ENCODE measurements at regions of chr1 and their contacts with region 1.

Region 1: GRCh38 chr1:114716304-114717170 is at the start of gene NRAS:
- DNase-seq: peak; percentile 97
- H3K4me3 ChIP-seq: peak within 1 kb of the TSS; percentile 64 to 87 (median 81)
- H3K27ac ChIP-seq: peak within 1 kb of the TSS; percentile 86 to 97 (median 93)
- H3K4me1 ChIP-seq: peaks cover 16 to 56% (median 33%) of the 10 kb centered on the region in 4 donors
- H3K27me3 ChIP-seq: no peaks in the 10 kb centered on the region
- CTCF ChIP-seq: peak in 1 of 5 experiments; percentile 22
- EP300 ChIP-seq: peak; percentile 57
- POLR2A ChIP-seq: peak; percentile 84
- total RNA-seq, gene NRAS: 14.5 to 56.3 (median 44.6) TPM

Region 2: DNA sequence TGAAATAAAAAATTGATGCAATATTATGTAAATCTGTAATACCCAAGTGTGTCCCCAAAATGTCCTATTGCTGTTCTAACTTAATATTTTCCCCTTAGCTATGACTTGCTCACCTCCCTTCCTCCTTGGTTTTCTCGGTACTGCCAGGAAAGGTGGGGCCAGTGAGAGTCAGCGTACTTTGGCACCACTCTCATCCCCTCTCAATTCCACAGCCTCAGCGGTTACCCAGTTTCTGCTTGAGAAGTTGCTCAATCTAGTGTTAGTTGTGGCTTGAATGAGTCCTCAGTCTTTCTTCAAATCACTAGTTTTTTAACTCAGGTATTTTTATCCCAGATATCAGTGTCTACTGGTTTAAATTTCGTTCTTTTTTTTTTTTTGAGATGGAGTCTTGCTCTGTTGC is 167.4 kb before region 1 on chr1:
- in situ Hi-C with region 1: no loop called
- intact Hi-C with region 1: no loop called
- DNase-seq: no peak
- H3K4me3 ChIP-seq: no peak overlapping the region
- H3K27ac ChIP-seq: no peak overlapping the region
- H3K4me1 ChIP-seq: no peaks in the 10 kb centered on the region
- H3K27me3 ChIP-seq: no peaks in the 10 kb centered on the region
- CTCF ChIP-seq: no peak
- EP300 ChIP-seq: no peak
- POLR2A ChIP-seq: no peak

Region 3: DNA sequence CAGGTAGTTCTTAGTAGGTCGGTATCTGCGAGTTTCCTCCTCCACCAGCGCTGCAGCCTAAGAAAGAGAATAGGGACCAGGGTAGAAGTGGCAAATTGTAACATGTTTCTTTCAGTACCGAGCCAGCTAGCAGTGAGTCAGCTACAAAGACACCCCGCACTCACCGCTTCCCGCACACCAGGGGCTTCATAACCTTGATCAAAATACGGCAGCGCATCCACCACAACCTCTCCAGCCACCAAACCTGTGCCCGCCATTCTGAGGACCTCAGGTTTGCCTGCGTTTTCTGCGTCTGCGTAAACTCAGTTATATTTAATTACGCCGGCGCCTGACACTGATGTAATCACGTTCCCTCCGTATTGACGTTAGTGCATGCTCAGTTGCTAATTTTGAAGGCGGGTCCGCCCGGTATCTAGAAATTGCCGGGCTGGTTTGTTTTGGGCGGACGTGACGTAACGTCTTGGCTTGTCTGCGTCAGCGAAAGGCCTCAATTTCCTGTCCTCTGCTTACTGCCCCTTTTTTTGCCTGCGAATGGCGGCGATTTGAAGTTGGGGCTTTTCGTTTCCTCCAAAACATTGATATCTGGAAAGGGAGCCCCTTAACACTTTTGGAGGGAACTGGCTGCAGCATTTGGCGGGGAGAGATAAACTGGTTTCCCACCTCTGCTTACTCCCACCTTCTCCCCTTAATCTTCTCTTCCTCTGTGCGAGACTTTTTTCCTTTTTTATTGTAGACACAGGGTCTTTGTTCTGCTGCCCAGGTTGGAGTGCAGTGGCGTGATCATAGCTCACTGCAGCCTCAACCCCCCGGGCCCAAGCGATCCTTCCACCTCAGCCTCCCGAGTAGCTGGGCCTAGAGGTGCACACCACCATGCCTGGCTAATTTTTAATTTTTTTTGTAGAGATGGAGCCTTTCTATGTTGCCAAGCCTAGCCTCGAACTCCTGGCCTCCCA is 134.9 kb before region 1 on chr1 and contains the start of gene BCAS2:
- in situ Hi-C with region 1: loop called in 1 of 4 experiments (anchors 25 kb)
- intact Hi-C with region 1: no loop called
- DNase-seq: peak; percentile 98
- H3K4me3 ChIP-seq: peak within 1 kb of the TSS; percentile 39 to 70 (median 52)
- H3K27ac ChIP-seq: peak within 1 kb of the TSS; percentile 83 to 90 (median 90)
- H3K4me1 ChIP-seq: peaks cover 8 to 25% (median 18%) of the 10 kb centered on the region in 4 donors
- H3K27me3 ChIP-seq: no peaks in the 10 kb centered on the region
- CTCF ChIP-seq: no peak
- EP300 ChIP-seq: peak; percentile 75
- POLR2A ChIP-seq: peak; percentile 95
- total RNA-seq, gene BCAS2: 22.4 to 26.5 (median 24.5) TPM